GM18951 (cell line): ENCODE measurements at regions of chr2 and their contacts with region 1.

Region 1: DNA sequence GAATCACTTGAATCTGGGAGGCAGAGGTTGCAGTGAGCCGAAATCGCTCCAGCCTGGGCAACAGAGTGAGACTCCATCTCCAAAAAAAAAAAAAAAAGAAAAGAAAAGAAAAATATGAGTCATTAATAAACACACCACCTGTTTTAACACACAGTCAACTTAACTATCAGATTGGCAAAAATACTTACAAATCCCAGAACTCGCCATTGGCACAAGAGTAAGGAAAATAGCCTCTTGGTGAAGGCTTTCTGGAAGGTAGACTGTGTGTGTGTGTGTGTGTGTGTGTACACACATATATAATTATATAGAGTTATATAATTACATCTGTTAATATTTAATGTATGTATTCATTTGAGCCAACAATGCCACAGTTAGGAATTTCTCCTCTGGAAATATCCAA is 63.7 kb upstream of the UXS1 start:
- POLR2A ChIP-seq: no peak

Region 2: DNA sequence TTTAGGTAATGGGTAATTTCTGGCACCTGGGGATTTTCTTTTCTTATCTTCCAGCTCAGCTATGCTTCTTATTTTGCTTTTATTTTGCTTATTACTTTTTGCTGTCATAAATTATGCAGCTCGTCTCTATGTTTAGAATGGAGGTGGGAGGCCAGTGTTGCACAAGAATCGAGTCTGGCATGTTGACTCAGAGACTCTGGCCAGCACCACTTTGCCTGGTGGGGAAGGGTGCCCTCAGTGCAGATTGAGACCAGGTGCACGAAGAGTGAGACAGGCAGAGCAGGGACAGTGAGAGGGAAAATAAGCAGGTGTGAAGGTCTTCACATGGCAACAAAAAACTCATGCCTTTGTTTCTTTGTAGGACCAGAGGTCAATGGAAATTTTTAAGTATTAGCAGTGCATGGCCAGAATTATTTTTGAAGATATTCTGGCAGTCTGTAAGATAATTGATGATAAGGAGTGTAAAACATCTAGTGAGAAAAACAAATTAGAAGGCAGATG is 1669.3 kb after region 1 on chr2:
- in situ Hi-C with region 1: loop called (anchors 10 kb)
- POLR2A ChIP-seq: no peak